ENCODE measurements at regions of chr17 and their contacts with region 1.

Region 1: DNA sequence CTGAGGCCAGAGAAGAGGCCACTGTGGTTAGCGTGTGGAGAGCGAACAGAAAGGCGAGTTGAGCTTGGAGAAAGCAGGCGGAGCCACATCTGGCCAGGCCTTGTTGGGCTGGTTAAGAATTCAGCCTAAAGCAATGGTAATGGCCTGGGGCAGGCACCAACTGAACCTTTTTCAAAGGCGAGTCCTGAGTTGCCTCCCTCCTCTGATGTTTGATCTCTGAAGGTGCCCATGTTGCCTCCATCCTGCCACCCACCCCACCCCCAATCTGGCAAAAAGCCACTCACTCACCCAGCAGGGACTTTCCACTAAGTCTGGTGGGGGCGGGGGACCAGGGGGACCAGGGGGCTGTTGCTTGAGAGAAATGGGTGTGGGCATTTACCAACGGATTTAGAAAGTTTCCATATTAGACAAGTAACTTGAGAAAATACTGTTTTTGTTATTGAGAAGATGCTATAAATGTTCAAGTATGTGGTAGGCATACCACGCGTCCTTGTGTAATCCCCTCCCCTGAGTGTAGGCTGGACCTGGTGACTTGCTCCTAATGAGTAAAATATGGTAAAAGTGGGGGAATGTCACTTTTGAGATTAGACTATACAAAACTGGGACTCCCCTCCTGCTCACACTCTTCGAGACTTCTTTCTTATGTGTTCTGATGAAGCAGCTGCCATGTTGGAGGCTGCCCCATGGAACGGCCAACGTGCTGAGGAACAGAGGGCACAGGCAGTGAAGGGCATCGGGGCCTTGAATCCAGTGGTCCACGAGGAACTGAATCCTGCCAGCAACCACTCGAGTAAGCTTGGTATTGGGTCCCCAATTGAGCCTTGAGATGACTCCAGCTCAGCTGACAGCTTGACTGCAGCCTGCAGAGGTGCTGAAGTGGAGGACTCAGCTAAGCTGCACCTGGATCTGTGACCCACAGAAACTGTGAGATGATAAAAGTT is 29.9 kb upstream of the TNS4 start:
- DNase-seq: no peak
- H3K4me3 Mint-ChIP-seq: no peak overlapping the region
- H3K27ac Mint-ChIP-seq: no peak overlapping the region
- H3K4me1 Mint-ChIP-seq: peaks cover 19% of the 10 kb centered on the region
- H3K27me3 Mint-ChIP-seq: peaks cover 48% of the 10 kb centered on the region
- CTCF ChIP-seq: no peak

Region 2: DNA sequence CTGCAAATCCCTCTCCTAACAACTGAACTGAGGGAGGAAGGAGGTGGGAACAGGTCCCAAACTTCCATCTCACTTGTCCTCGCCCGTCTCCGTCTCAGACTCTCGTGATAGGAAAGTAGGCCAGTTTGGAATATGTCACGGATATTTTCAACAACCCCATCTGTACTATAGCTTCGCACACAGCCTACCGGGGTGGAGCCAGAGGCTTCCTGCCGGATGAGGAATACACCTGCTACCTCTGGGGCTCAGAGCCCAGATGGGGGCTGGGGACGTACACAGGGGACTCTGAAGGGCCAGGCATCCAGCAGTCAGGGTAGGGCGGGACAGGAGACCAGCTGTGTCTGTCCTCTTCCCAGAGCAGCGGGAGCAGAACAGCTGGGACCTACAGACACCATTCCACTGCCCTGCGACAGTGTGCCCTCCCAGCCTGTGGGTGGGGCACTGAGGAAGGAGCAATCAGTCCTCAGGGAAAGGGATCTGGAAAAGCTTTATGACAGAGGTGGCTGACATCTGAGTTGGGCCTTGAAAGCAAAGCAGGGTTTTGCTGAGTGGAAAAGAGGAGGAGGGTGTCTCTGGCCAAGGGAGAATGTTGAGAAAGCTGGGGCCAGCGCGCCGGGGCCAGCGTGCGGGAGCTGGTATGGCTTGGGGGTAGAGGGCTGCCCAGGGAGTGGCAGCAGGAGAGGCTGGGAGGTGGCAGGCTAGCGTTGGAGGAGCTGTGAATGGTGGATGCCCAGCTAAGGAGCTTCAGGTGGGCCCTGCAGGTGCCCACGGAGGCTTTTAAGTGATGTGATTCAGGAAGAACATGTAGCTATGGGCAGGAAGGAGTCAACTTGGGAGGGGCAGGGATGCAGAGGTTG is 1914.1 kb before region 1 on chr17:
- CTCF ChIA-PET with region 1: no interaction called
- intact Hi-C with region 1: no loop called
- DNase-seq: no peak
- H3K4me3 Mint-ChIP-seq: no peak overlapping the region
- H3K27ac Mint-ChIP-seq: no peak overlapping the region
- H3K4me1 Mint-ChIP-seq: peaks cover 18% of the 10 kb centered on the region
- H3K27me3 Mint-ChIP-seq: peaks cover 61% of the 10 kb centered on the region
- CTCF ChIP-seq: no peak

Region 3: GRCh38 chr17:40021451-40021971 is 509.8 kb before region 1 on chr17:
- CTCF ChIA-PET with region 1: interaction called, 17 read pairs
- intact Hi-C with region 1: no loop called
- DNase-seq: peak; percentile 88
- H3K4me3 Mint-ChIP-seq: no peak overlapping the region
- H3K27ac Mint-ChIP-seq: no peak overlapping the region
- H3K4me1 Mint-ChIP-seq: peaks cover 36% of the 10 kb centered on the region
- H3K27me3 Mint-ChIP-seq: peaks cover 23% of the 10 kb centered on the region
- CTCF ChIP-seq: no peak

Region 4: GRCh38 chr17:40355123-40355803 is 176.1 kb before region 1 on chr17:
- CTCF ChIA-PET with region 1: interaction called, 222 read pairs
- intact Hi-C with region 1: loop called (anchors 1 kb)
- DNase-seq: peak; percentile 100
- H3K4me3 Mint-ChIP-seq: no peak overlapping the region
- H3K27ac Mint-ChIP-seq: no peak overlapping the region
- H3K4me1 Mint-ChIP-seq: peaks cover 29% of the 10 kb centered on the region
- H3K27me3 Mint-ChIP-seq: no peaks in the 10 kb centered on the region
- CTCF ChIP-seq: no peak

Region 5: GRCh38 chr17:40433551-40434415 is 97.5 kb before region 1 on chr17:
- CTCF ChIA-PET with region 1: interaction called, 4,142 read pairs
- intact Hi-C with region 1: no loop called
- DNase-seq: peak; percentile 94
- H3K4me3 Mint-ChIP-seq: no peak overlapping the region
- H3K27ac Mint-ChIP-seq: no peak overlapping the region
- H3K4me1 Mint-ChIP-seq: no peaks in the 10 kb centered on the region
- H3K27me3 Mint-ChIP-seq: peaks cover 43% of the 10 kb centered on the region
- CTCF ChIP-seq: no peak

Region 6: DNA sequence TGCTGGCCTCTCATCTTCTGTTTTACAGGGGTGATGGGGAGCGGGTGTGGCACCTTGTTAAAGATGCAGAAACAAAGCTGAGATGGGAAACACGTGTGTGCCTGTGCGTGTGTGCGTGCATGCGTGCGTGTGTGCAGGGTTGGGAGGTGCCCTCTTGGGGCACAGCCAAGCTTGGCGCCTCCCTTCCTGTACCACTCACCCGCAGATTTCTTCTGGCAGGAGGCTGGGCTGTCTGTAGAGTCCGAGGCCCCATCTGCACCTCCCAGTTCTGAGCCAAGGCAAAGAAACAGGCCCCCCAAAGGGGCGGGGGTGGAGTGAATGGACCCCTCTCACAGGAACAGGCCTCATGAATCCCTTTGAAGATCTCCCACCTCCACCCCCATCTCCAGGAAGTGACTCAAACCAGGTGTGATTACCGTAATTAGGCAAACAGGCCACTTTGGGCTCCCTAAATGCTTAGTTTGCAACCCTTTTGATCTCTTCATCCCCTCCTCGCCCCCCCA is 50.8 kb before region 1 on chr17:
- CTCF ChIA-PET with region 1: interaction called, 4,142 read pairs
- intact Hi-C with region 1: loop called (anchors 1 kb)
- DNase-seq: peak; percentile 91
- H3K4me3 Mint-ChIP-seq: no peak overlapping the region
- H3K27ac Mint-ChIP-seq: no peak overlapping the region
- H3K4me1 Mint-ChIP-seq: peaks cover 25% of the 10 kb centered on the region
- H3K27me3 Mint-ChIP-seq: peaks cover 36% of the 10 kb centered on the region
- CTCF ChIP-seq: no peak

Region 7: GRCh38 chr17:40726919-40727318 is 195.6 kb after region 1 on chr17:
- CTCF ChIA-PET with region 1: no interaction called
- intact Hi-C with region 1: no loop called
- DNase-seq: peak; percentile 45
- H3K4me3 Mint-ChIP-seq: no peak overlapping the region
- H3K27ac Mint-ChIP-seq: no peak overlapping the region
- H3K4me1 Mint-ChIP-seq: peaks cover 19% of the 10 kb centered on the region
- H3K27me3 Mint-ChIP-seq: peaks cover 54% of the 10 kb centered on the region
- CTCF ChIP-seq: no peak

Region 8: DNA sequence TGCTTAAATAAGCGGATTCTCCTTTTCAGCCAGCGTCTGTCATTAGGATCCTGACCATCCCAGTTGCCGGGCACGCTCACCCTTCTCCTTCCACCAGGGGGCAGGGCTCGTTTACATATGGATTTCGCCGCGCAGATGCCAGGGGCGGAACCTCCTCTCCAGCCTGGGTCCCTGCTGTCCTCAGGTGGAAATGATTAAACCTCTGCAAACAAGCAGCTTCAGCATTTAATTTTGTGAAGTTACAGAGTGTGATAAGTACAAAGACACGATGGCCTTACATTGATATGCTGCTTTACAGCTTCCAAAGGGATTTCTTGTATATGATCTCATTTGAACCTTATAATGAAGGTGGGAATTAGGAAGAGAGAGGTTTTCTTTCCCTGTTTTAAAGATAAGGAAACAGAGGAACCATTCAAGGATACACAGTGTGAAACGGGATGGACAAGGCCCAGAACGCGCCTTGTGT is 272.3 kb after region 1 on chr17:
- CTCF ChIA-PET with region 1: interaction called, 24 read pairs
- intact Hi-C with region 1: loop called (anchors 1 kb)
- DNase-seq: peak; percentile 100
- H3K4me3 Mint-ChIP-seq: no peak overlapping the region
- H3K27ac Mint-ChIP-seq: no peak overlapping the region
- H3K4me1 Mint-ChIP-seq: no peaks in the 10 kb centered on the region
- H3K27me3 Mint-ChIP-seq: peaks cover 38% of the 10 kb centered on the region
- CTCF ChIP-seq: peak; percentile 100

Measured in Calu3 (cell line).